IMR-90 (cell line): ENCODE measurements at regions of chr17 and their contacts with region 1.

Region 1: DNA sequence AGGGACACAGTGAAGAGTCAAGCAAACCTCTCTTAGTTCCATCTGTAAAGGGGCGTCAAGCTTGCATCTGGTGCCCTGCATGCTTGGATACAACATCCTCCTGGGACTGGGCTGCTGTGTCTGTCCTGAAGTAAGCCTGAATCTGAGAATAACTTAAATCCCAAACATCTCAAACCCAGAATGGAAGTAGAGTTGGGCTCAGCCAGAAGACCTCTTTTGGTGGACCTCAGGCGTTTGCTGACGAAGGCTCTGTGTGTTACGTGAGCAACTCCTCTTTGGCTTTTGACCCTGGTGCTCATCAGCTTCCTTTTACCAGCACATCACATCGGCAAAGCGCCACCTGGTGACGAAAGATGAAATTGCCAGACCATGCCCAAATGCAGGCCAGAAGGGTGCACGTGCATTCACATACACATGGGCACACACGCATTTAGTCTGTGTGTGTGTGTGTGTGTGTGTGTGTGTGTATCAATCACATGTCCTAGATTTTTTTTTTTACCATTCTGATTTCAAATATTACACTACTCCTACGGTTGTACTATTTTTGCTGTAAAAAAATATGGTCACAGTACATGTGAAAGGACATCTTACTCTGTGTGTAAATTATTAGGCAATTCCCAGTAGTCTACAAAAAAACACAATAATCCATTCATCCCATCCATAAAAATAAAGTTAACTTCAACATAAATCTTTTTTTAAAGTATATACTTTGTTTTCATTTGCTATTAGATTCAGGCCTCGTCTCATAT is 41.1 kb upstream of the FOXJ1 start:
- DNase-seq: peak; percentile 89
- ATAC-seq: peak; percentile 97
- H3K4me3 ChIP-seq: no peak overlapping the region
- H3K27ac ChIP-seq: no peak overlapping the region
- H3K4me1 ChIP-seq: no peaks in the 10 kb centered on the region
- H3K27me3 ChIP-seq: no peaks in the 10 kb centered on the region
- CTCF ChIP-seq: peak; percentile 79
- POLR2A ChIP-seq: no peak
- RAD21 ChIP-seq: peak; percentile 72

Region 2: GRCh38 chr17:75468291-75468754 is 713.9 kb before region 1 on chr17:
- CTCF ChIA-PET with region 1: no interaction called
- POLR2A ChIA-PET with region 1: no interaction called
- dilution Hi-C with region 1: no loop called
- in situ Hi-C with region 1: no loop called
- intact Hi-C with region 1: no loop called
- DNase-seq: no peak
- ATAC-seq: no peak
- H3K4me3 ChIP-seq: no peak overlapping the region
- H3K27ac ChIP-seq: no peak overlapping the region
- H3K4me1 ChIP-seq: no peaks in the 10 kb centered on the region
- H3K27me3 ChIP-seq: no peaks in the 10 kb centered on the region
- CTCF ChIP-seq: no peak
- POLR2A ChIP-seq: no peak
- RAD21 ChIP-seq: no peak

Region 3: GRCh38 chr17:76166168-76166567 is 16.0 kb before region 1 on chr17:
- CTCF ChIA-PET with region 1: interaction called, 16 read pairs
- POLR2A ChIA-PET with region 1: no interaction called
- dilution Hi-C with region 1: no loop called
- in situ Hi-C with region 1: no loop called
- intact Hi-C with region 1: no loop called
- DNase-seq: peak; percentile 36
- ATAC-seq: no peak
- H3K4me3 ChIP-seq: no peak overlapping the region
- H3K27ac ChIP-seq: no peak overlapping the region
- H3K4me1 ChIP-seq: no peaks in the 10 kb centered on the region
- H3K27me3 ChIP-seq: no peaks in the 10 kb centered on the region; the same call in none of the 2 replicates
- CTCF ChIP-seq: no peak
- POLR2A ChIP-seq: no peak
- RAD21 ChIP-seq: no peak